Right ventricle myocardium superior (tissue), 1 donor: ENCODE measurements at regions of chr6 and their contacts with region 1.

Region 1: GRCh38 chr6:18595774-18596530 is 208.8 kb downstream of the RNF144B start:
- DNase-seq: no peak
- ATAC-seq: peak; percentile 89

Region 2: DNA sequence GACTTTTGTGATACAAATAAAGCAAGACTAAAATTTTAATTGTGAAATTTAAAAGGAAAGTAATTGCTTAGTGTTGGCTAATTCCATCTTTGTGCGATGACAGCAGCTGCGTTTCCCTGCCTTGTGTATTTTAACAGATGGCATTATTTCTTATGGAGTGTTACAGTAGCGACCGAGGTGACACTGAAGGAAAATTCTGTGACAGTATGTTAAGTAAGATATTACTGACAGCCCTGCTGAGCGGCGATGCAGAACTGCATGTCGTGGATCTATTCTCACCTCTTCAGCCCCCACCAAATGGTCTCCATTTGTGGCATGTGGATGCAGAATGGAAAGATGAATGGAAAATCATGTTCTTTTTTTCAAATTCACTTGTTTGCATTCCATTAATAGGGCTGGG is 80.6 kb after region 1 on chr6:
- intact Hi-C with region 1: no loop called
- DNase-seq: no peak
- ATAC-seq: no peak

Region 3: GRCh38 chr6:20056350-20056992 is 1460.5 kb after region 1 on chr6:
- intact Hi-C with region 1: loop called (anchors 10 kb)
- DNase-seq: no peak
- ATAC-seq: peak; percentile 46